IMR-90 (cell line): ENCODE measurements at regions of chr12 and their contacts with region 1.

Region 1: GRCh38 chr12:65565601-65566560 is 258.4 kb upstream of the HMGA2 start:
- DNase-seq: peak; percentile 99
- ATAC-seq: peak; percentile 78
- H3K4me3 ChIP-seq: peak overlapping the region; percentile 13; the same call in 1 of the 2 replicates
- H3K27ac ChIP-seq: peak overlapping the region; percentile 98
- H3K4me1 ChIP-seq: peaks cover 25% of the 10 kb centered on the region
- H3K27me3 ChIP-seq: no peaks in the 10 kb centered on the region
- CTCF ChIP-seq: 0 out of 2 replicates have a peak, but pooled peaks have one; percentile 0
- POLR2A ChIP-seq: peak; percentile 72; the same call in 1 of the 2 replicates
- RAD21 ChIP-seq: peak; percentile 13

Region 2: DNA sequence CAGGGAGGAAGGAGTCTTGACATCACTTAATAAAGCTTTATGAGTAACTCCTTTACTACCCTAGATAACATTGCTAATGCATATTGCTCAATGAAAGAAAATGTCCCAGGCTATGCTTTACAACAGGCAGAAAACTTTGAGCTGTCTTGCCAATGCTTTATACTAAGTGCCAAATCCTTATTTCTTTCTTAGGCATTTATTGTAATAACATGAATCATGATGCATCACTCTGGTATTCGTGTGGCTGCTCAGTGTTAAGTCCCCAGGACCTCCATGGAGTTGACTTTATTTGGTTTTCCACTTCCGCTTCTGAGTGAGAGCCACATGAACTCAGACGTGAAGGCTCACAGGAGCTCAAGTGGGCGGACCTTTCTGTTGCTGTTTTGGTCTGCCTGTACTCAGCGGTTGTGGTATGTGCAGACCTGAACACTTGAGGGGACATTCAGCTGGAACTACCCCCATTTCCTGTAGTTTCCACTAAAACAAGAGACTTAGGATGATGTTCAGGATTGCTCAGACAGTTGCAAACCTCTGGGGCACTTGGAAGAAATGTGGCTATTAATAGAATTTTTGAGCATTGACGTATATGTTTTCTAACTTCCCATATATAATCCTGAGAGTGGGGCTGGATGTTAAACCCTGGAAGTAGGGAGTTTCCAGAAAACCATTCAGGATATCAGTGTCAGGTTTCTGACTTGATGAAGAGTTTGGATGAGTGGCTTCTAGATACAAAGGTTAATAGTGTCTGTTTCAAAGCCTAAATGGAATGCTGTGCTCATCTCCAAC is 28.8 kb before region 1 on chr12:
- CTCF ChIA-PET with region 1: no interaction called
- POLR2A ChIA-PET with region 1: interaction called, 5 read pairs
- dilution Hi-C with region 1: no loop called
- in situ Hi-C with region 1: no loop called
- intact Hi-C with region 1: loop called (anchors 2 kb)
- DNase-seq: peak; percentile 100
- ATAC-seq: peak; percentile 91
- H3K4me3 ChIP-seq: no peak overlapping the region
- H3K27ac ChIP-seq: peak overlapping the region; percentile 76
- H3K4me1 ChIP-seq: peaks cover 39% of the 10 kb centered on the region
- H3K27me3 ChIP-seq: no peaks in the 10 kb centered on the region
- CTCF ChIP-seq: no peak
- POLR2A ChIP-seq: no peak; the same call in none of the 2 replicates
- RAD21 ChIP-seq: peak; percentile 38; the same call in 1 of the 2 replicates

Region 3: GRCh38 chr12:66035288-66035966 is 469.5 kb after region 1 on chr12:
- CTCF ChIA-PET with region 1: no interaction called
- POLR2A ChIA-PET with region 1: no interaction called
- dilution Hi-C with region 1: no loop called
- in situ Hi-C with region 1: no loop called
- intact Hi-C with region 1: loop called (anchors 5 kb)
- DNase-seq: peak; percentile 61
- ATAC-seq: 0 out of 2 replicates have a peak, but pooled peaks have one; percentile 24
- H3K4me3 ChIP-seq: no peak overlapping the region
- H3K27ac ChIP-seq: no peak overlapping the region
- H3K4me1 ChIP-seq: peaks cover 6% of the 10 kb centered on the region
- H3K27me3 ChIP-seq: no peaks in the 10 kb centered on the region
- CTCF ChIP-seq: peak; percentile 56
- POLR2A ChIP-seq: no peak
- RAD21 ChIP-seq: peak; percentile 53

Region 4: DNA sequence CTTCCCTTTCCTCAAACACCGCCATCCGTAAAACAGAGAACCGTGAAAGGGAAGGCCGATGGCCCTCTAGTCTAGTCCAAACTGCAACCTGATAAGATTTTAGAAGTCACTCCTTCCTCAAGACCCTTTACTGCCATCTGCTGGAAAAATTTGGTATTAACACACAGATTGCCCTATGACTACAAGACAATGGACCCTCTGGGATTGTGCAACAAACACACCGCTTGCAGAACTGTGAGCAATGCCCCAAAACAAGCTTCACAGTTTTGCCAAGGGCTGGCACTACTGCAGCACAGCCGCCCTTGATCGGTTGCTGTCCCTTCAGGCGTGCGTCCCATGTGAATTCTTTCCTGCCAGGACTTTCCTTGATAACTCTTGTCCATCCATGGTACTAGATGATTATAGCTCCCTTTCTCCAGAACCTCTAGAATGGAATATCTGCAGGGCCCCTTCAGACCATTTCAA is 541.6 kb after region 1 on chr12:
- CTCF ChIA-PET with region 1: no interaction called
- POLR2A ChIA-PET with region 1: no interaction called
- dilution Hi-C with region 1: no loop called
- in situ Hi-C with region 1: no loop called
- intact Hi-C with region 1: loop called (anchors 5 kb)
- DNase-seq: peak; percentile 94
- ATAC-seq: peak; percentile 99
- H3K4me3 ChIP-seq: no peak overlapping the region
- H3K27ac ChIP-seq: no peak overlapping the region
- H3K4me1 ChIP-seq: peaks cover 4% of the 10 kb centered on the region
- H3K27me3 ChIP-seq: no peaks in the 10 kb centered on the region
- CTCF ChIP-seq: peak; percentile 77
- POLR2A ChIP-seq: no peak
- RAD21 ChIP-seq: peak; percentile 79